GM12878 (cell line): ENCODE measurements at regions of chr15 and their contacts with region 1.

Region 1: GRCh38 chr15:65792130-65792987 is at the start of gene DENND4A:
- DNase-seq: peak; percentile 97
- ATAC-seq: peak; percentile 79
- H3K4me3 ChIP-seq: peak within 1 kb of the TSS; percentile 96
- H3K27ac ChIP-seq: peak within 1 kb of the TSS; percentile 99
- H3K4me1 ChIP-seq: peaks cover 18% of the 10 kb centered on the region
- H3K27me3 ChIP-seq: no peaks in the 10 kb centered on the region
- CTCF ChIP-seq: no peak
- EP300 ChIP-seq: peak; percentile 90 to 96
- POLR2A ChIP-seq: peak; percentile 92
- RAD21 ChIP-seq: no peak
- polyA plus RNA-seq, gene DENND4A: 14.2 to 15.4 TPM

Region 2: GRCh38 chr15:65304389-65305144 is 487.8 kb before region 1 on chr15 and contains the start of gene RNU5B-1:
- CTCF ChIA-PET with region 1: no interaction called
- POLR2A ChIA-PET with region 1: interaction called, 5 read pairs
- RAD21 ChIA-PET with region 1: no interaction called
- SMC1A ChIA-PET with region 1: no interaction called
- in situ Hi-C with region 1: no loop called
- intact Hi-C with region 1: loop called (anchors 5 kb)
- DNase-seq: peak; percentile 96
- ATAC-seq: peak; percentile 86
- H3K4me3 ChIP-seq: peak within 1 kb of the TSS; percentile 33
- H3K27ac ChIP-seq: peak within 1 kb of the TSS; percentile 97
- H3K4me1 ChIP-seq: peaks cover 10% of the 10 kb centered on the region
- H3K27me3 ChIP-seq: no peaks in the 10 kb centered on the region
- CTCF ChIP-seq: peak; percentile 82 to 91 (median 89)
- EP300 ChIP-seq: no peak
- POLR2A ChIP-seq: peak; percentile 96
- RAD21 ChIP-seq: peak; percentile 34; the same call in 1 of the 2 replicates
- polyA plus RNA-seq, gene RNU5B-1: not detected

Region 3: GRCh38 chr15:65583701-65584100 is 208.7 kb before region 1 on chr15:
- CTCF ChIA-PET with region 1: no interaction called
- POLR2A ChIA-PET with region 1: no interaction called
- RAD21 ChIA-PET with region 1: no interaction called
- SMC1A ChIA-PET with region 1: no interaction called
- in situ Hi-C with region 1: no loop called
- intact Hi-C with region 1: no loop called
- DNase-seq: peak; percentile 28
- ATAC-seq: peak; percentile 94
- H3K4me3 ChIP-seq: no peak overlapping the region
- H3K27ac ChIP-seq: peak overlapping the region; percentile 50; the same call in 1 of the 2 replicates
- H3K4me1 ChIP-seq: peaks cover 4% of the 10 kb centered on the region; the same call in 1 of the 2 replicates
- H3K27me3 ChIP-seq: no peaks in the 10 kb centered on the region
- CTCF ChIP-seq: no peak
- EP300 ChIP-seq: no peak
- POLR2A ChIP-seq: no peak
- RAD21 ChIP-seq: no peak

Region 4: GRCh38 chr15:65675551-65675950 is 116.8 kb before region 1 on chr15:
- CTCF ChIA-PET with region 1: no interaction called
- POLR2A ChIA-PET with region 1: no interaction called
- RAD21 ChIA-PET with region 1: no interaction called
- SMC1A ChIA-PET with region 1: no interaction called
- in situ Hi-C with region 1: no loop called
- intact Hi-C with region 1: no loop called
- DNase-seq: no peak
- ATAC-seq: no peak
- H3K4me3 ChIP-seq: no peak overlapping the region
- H3K27ac ChIP-seq: no peak overlapping the region
- H3K4me1 ChIP-seq: no peaks in the 10 kb centered on the region
- H3K27me3 ChIP-seq: no peaks in the 10 kb centered on the region
- CTCF ChIP-seq: no peak
- EP300 ChIP-seq: no peak
- POLR2A ChIP-seq: no peak
- RAD21 ChIP-seq: no peak

Region 5: DNA sequence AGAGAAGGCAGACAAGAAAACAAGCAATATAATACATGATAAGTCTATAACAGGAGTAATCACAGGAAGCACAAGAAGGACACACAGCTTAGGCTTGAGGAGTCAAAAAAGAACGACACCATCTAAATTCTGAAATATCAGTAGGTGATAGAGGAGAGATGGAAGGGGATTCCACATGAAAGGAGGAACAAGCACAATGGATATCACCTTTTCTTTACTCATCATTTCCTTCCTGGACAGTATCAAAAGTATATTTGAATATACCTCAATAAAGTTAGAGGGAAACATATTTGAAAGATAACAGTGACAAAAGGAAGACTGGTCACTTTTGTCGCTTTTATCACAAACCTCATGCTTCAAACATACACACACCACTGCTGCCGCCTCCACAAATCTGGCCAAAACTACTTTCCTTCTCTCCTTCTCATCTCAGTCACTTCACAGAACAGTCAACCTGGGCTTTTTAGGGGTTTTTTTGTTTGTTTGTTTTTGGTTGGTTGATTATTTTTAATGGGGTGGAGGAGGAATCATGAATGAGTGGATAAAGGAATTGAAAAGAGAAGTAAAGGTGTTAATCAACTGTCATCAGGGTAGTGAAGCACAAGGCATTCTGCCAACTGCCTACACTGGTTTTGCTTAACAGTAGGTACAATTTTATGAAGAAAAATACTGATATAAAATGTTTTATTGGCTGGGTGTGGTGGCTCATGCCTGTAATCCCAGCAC is 18.8 kb before region 1 on chr15:
- CTCF ChIA-PET with region 1: interaction called, 5 read pairs
- POLR2A ChIA-PET with region 1: interaction called, 86 read pairs
- RAD21 ChIA-PET with region 1: interaction called, 37 read pairs
- SMC1A ChIA-PET with region 1: interaction called, 28 read pairs
- in situ Hi-C with region 1: no loop called
- intact Hi-C with region 1: no loop called
- DNase-seq: peak; percentile 88
- ATAC-seq: peak; percentile 78
- H3K4me3 ChIP-seq: no peak overlapping the region; the same call in 1 of the 2 replicates
- H3K27ac ChIP-seq: peak overlapping the region; percentile 84
- H3K4me1 ChIP-seq: peaks cover 21% of the 10 kb centered on the region
- H3K27me3 ChIP-seq: no peaks in the 10 kb centered on the region
- CTCF ChIP-seq: no peak
- EP300 ChIP-seq: peak; percentile 45 to 63; a peak in 3 of 4 replicates
- POLR2A ChIP-seq: no peak
- RAD21 ChIP-seq: peak; percentile 25; the same call in 1 of the 2 replicates

Region 6: DNA sequence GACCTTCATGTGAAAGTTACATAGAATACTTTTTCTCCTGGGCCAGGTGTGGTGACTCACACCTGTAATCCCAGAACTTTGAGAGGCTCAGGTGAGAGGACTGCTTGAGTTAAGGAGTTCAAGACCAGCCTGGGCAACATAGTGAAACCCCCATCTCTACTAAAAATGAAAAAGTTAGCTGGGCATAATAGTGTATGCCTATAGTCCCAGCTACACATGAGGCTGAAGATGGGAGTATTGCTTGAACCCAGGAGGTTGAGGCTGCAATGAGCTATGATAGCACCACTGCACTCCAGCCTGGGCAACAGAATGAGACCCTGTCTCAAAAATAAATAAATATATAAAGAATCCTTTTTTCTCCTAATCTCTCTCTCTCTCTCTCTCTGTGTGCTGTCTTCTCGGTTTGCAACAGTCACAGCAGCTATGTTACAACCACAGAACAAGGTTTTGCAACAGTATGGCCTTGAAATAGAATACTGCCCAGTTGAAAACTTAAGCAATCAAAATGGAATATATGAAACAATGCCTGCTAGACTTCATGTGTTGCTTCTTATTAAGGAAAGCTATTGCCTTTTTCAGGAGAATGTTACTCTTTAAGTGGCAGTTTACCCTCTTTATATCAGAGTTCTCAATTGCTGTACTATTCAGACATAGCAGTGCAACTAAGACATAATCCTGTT is 12.0 kb after region 1 on chr15:
- CTCF ChIA-PET with region 1: interaction called, 10 read pairs
- POLR2A ChIA-PET with region 1: interaction called, 43 read pairs
- RAD21 ChIA-PET with region 1: interaction called, 18 read pairs
- SMC1A ChIA-PET with region 1: interaction called, 29 read pairs
- in situ Hi-C with region 1: no loop called
- intact Hi-C with region 1: no loop called
- DNase-seq: no peak
- ATAC-seq: peak; percentile 40
- H3K4me3 ChIP-seq: no peak overlapping the region
- H3K27ac ChIP-seq: peak overlapping the region; percentile 10; the same call in 1 of the 2 replicates
- H3K4me1 ChIP-seq: peaks cover 27% of the 10 kb centered on the region
- H3K27me3 ChIP-seq: no peaks in the 10 kb centered on the region
- CTCF ChIP-seq: no peak
- EP300 ChIP-seq: no peak
- POLR2A ChIP-seq: no peak
- RAD21 ChIP-seq: no peak

Region 7: GRCh38 chr15:65824031-65824743 is 31.8 kb after region 1 on chr15:
- CTCF ChIA-PET with region 1: interaction called, 155 read pairs
- POLR2A ChIA-PET with region 1: interaction called, 260 read pairs
- RAD21 ChIA-PET with region 1: interaction called, 344 read pairs
- SMC1A ChIA-PET with region 1: interaction called, 488 read pairs
- in situ Hi-C with region 1: no loop called
- intact Hi-C with region 1: loop called (anchors 2 kb)
- DNase-seq: no peak
- ATAC-seq: peak; percentile 75
- H3K4me3 ChIP-seq: no peak overlapping the region
- H3K27ac ChIP-seq: peak overlapping the region; percentile 1; the same call in 1 of the 2 replicates
- H3K4me1 ChIP-seq: peaks cover 50% of the 10 kb centered on the region
- H3K27me3 ChIP-seq: no peaks in the 10 kb centered on the region
- CTCF ChIP-seq: peak; percentile 63 to 74 (median 73)
- EP300 ChIP-seq: no peak
- POLR2A ChIP-seq: no peak
- RAD21 ChIP-seq: peak; percentile 68